ENCODE measurements at regions of chr22 and their contacts with region 1.

Region 1: GRCh38 chr22:22748297-22748743 is 103.9 kb downstream of the GGTLC2 start:
- DNase-seq: peak; percentile 61
- H3K4me3 ChIP-seq: no peak overlapping the region
- H3K27ac ChIP-seq: no peak overlapping the region
- H3K4me1 ChIP-seq: peaks cover 44% of the 10 kb centered on the region
- CTCF ChIP-seq: peak; percentile 96

Region 2: DNA sequence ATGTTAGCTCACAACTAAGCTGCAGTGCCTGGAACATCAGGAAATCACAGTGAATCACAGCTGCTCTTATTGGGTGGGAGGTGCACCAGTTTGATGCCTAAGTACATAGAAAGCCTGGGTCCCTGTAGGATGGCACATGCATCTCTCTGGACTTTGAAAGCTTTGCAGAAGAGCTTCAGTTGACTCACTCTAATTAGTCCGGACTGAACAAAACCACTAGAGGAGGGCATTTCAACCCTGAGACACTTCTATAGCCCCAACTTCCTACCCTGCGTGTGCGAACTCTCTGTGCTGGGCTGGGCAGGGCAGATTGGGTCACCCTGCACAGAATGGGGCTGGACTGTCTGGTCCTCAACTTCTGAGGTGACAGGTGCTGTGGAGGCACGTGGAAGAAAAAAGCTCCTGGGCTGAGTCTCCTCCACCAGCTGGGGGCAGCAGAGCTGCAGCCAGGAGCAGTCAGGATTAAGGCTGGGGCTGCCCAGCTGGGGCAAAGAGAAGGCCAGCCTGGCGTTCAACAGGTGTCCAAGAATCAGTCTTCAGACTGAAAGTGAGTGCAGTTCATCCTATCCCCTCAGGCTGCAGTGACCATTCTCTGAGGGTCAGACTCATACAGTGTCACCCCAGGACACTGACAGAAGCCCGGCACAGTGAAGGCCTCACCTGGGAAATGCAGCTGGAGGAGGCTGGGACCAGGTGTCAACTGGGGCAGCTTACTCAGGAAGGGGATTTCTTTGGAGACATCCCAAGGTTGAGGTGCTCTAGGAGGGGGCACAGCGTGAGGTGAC is 81.8 kb before region 1 on chr22:
- CTCF ChIA-PET with region 1: interaction called, 8 read pairs
- POLR2A ChIA-PET with region 1: no interaction called
- intact Hi-C with region 1: loop called (anchors 5 kb)
- DNase-seq: peak; percentile 75
- H3K4me3 ChIP-seq: no peak overlapping the region
- H3K27ac ChIP-seq: no peak overlapping the region
- H3K4me1 ChIP-seq: peaks cover 32% of the 10 kb centered on the region
- CTCF ChIP-seq: peak; percentile 96

Region 3: DNA sequence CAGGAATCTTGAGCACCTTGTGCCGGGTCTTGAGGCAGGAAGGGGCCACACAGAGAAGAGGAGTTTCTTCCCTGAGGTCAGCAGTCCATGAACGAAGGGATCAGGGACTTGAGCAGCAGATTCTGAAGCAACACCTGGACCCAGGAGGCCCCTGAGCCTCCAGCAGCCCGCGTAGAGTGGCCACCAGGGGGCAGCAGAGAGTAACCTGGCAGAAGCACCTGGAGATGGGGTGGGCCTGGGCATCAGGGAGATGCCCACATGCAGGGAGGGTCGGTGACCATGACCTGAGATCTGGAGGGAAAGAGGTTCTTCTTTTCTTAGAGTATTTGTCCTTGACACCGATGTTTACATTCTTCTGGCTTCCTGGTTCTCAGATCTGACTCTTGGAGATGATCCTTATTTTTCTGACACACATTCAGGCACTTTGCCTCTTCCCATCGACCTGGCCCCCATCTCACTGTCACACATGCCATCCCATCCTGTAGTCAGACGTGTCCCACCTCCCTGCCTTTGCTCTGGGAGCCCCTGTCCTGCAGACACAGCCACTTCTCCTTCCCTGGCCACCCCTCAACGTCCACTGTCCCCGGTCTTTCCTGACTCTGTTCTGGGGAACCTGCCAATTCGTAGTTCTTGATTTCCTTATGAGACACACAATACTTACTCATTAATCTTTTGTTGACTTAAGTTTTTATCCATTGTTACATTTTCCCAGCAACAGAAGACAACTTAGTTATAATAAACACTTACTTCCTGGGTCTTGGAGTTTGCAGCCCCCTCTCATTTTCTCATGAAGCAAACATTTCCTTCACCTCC is 37.4 kb before region 1 on chr22:
- CTCF ChIA-PET with region 1: interaction called, 8 read pairs
- POLR2A ChIA-PET with region 1: no interaction called
- intact Hi-C with region 1: loop called (anchors 5 kb)
- DNase-seq: peak; percentile 69
- H3K4me3 ChIP-seq: no peak overlapping the region
- H3K27ac ChIP-seq: no peak overlapping the region
- H3K4me1 ChIP-seq: peaks cover 64% of the 10 kb centered on the region
- CTCF ChIP-seq: peak; percentile 97

Region 4: DNA sequence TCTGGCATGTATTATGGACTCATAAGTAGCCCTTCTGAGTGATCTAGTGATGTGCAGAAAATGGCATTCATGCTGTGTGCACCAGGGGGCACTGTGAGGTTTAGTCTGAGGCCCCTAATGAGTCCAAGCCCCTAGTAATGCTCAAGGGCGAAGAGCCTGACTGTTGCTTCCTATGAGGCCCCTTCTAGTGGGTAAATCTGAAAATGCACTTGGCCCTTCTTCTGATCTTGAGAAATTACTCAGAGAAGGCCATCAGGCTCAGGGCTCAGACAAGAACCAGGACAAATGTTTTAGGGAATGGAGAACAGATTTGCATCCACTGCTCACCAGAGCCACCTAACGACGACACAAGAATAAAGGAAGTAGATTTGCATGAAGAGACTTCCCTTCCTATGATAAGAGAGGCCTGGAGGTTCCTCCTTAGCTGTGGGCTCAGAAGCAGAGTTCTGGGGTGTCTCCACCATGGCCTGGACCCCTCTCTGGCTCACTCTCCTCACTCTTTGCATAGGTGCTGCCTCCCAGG is 28.1 kb before region 1 on chr22:
- CTCF ChIA-PET with region 1: interaction called, 17 read pairs
- POLR2A ChIA-PET with region 1: interaction called, 4 read pairs
- intact Hi-C with region 1: loop called (anchors 1 kb)
- DNase-seq: peak; percentile 91
- H3K4me3 ChIP-seq: peak overlapping the region; percentile 59
- H3K27ac ChIP-seq: peak overlapping the region; percentile 92
- H3K4me1 ChIP-seq: peaks cover 72% of the 10 kb centered on the region
- CTCF ChIP-seq: peak; percentile 100

Region 5: DNA sequence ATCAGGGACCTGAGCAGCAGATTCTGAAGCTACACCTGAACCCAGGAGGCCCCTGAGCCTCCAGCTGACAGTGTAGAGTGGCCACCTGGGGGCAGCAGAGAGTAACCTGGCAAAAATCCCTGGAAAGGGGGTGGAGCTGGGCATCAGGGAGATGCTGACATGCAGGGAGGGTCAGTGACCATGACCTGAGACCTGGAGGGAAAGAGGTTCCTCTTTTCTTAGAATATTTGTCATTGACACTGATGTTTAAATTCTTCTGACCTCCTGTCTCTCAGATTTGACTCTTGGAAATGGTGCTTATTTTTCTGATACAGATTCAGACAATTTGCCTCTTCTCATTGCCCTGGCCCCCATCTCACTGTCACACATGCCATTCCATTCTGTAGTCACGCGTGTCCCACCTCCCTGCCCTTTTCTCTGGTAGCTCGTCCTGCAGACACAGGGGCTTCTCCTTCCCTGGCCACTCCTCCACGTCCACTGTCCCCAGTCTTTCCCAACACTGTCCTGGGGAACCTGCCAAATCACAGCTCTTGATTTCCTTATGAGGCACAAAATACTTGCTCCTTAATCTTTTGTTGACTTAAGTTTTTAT is 22.1 kb after region 1 on chr22:
- CTCF ChIA-PET with region 1: interaction called, 18 read pairs
- POLR2A ChIA-PET with region 1: no interaction called
- intact Hi-C with region 1: no loop called
- DNase-seq: peak; percentile 59
- H3K4me3 ChIP-seq: no peak overlapping the region
- H3K27ac ChIP-seq: no peak overlapping the region
- H3K4me1 ChIP-seq: peaks cover 20% of the 10 kb centered on the region
- CTCF ChIP-seq: peak; percentile 93